Prostate gland (tissue), 2 donors: ENCODE measurements at regions of chr5 and their contacts with region 1.

Region 1: GRCh38 chr5:36414869-36415282 is 113.2 kb upstream of the RANBP3L start:
- DNase-seq: no peak
- H3K4me3 ChIP-seq: no peak overlapping the region
- H3K27ac ChIP-seq: no peak overlapping the region
- H3K4me1 ChIP-seq: no peaks in the 10 kb centered on the region
- H3K27me3 ChIP-seq: no peaks in the 10 kb centered on the region
- CTCF ChIP-seq: peak in 3 of 4 experiments; percentile 67 to 75 (median 71)
- POLR2A ChIP-seq: no peak

Region 2: GRCh38 chr5:36200513-36200912 is 214.4 kb before region 1 on chr5:
- intact Hi-C with region 1: no loop called
- DNase-seq: no peak
- H3K4me3 ChIP-seq: no peak overlapping the region
- H3K27ac ChIP-seq: no peak overlapping the region
- H3K4me1 ChIP-seq: no peaks in the 10 kb centered on the region
- H3K27me3 ChIP-seq: no peaks in the 10 kb centered on the region
- CTCF ChIP-seq: no peak
- POLR2A ChIP-seq: no peak

Region 3: GRCh38 chr5:36507332-36507952 is 92.6 kb after region 1 on chr5:
- intact Hi-C with region 1: loop called (anchors 2 kb)
- DNase-seq: peak; percentile 78
- H3K4me3 ChIP-seq: no peak overlapping the region
- H3K27ac ChIP-seq: no peak overlapping the region
- H3K4me1 ChIP-seq: no peaks in the 10 kb centered on the region
- H3K27me3 ChIP-seq: no peaks in the 10 kb centered on the region
- CTCF ChIP-seq: peak; percentile 54 to 90 (median 76)
- POLR2A ChIP-seq: no peak

Region 4: DNA sequence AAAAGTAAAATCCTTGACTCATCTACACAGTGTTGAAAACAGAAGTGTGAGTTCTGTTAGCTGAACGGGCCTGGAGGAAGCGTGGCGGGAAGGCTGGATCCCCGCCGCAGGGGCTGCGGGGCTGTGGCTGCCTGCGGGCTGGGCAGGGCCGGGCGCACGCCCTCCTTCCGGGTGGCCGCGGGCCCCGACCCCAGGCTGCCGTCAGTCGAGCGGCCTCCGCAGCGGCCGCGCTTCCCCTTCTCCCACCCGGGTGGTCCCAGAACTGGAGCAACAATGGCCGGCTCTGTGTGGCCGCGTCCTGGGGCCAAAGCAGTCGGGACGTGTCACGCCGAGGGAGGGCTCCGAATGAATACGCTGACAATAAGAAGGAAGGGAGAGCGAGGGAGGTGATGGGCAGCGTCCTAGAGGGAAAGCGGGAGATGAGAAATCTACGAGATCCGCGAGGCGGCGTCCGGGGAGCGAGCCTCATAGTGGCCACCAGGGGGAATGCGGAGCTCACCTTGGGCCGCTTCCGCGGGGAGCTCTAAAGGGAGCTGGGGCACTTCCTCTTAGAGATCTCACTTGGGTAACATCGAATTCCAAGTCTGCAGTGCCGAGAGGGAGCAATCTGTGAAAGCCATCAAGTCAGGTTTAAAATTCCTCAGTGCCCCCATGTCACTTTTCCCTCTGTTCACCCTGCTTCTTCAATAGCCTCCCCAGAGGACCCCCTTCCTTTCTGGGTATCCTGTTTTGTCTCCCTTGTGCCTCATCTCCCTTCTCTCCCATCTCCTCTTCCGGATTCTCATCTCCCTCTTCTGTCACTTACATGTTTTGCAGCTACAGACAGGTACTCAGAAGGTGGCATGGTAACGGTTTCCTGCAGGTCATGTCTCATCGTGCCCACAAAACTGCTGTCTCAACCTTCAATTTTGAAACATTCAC is 275.4 kb after region 1 on chr5:
- intact Hi-C with region 1: loop called (anchors 5 kb)
- DNase-seq: peak; percentile 69
- H3K4me3 ChIP-seq: peak overlapping the region; percentile 42 to 48
- H3K27ac ChIP-seq: peak overlapping the region; percentile 68 to 83
- H3K4me1 ChIP-seq: no peaks in the 10 kb centered on the region
- H3K27me3 ChIP-seq: no peaks in the 10 kb centered on the region
- CTCF ChIP-seq: peak; percentile 52 to 87 (median 68)
- POLR2A ChIP-seq: no peak